CD4-positive, alpha-beta T cell (primary cell): ENCODE measurements at regions of chr15 and their contacts with region 1.

Region 1: GRCh38 chr15:73964736-73965093 is 27.4 kb downstream of the STOML1 start:
- DNase-seq: peak; percentile 76 to 94 (median 86)
- ATAC-seq: peak; percentile 82
- H3K4me3 ChIP-seq: peak overlapping the region; percentile 57
- H3K4me3 Mint-ChIP-seq: peak overlapping the region; percentile 73
- H3K27ac ChIP-seq: no peak overlapping the region
- H3K27ac Mint-ChIP-seq: peak overlapping the region; percentile 73
- H3K4me1 ChIP-seq: peaks cover 33% of the 10 kb centered on the region
- H3K4me1 Mint-ChIP-seq: peaks cover 46% of the 10 kb centered on the region
- H3K27me3 ChIP-seq: no peaks in the 10 kb centered on the region
- H3K27me3 Mint-ChIP-seq: no peaks in the 10 kb centered on the region
- CTCF ChIP-seq: peak; percentile 98

Region 2: DNA sequence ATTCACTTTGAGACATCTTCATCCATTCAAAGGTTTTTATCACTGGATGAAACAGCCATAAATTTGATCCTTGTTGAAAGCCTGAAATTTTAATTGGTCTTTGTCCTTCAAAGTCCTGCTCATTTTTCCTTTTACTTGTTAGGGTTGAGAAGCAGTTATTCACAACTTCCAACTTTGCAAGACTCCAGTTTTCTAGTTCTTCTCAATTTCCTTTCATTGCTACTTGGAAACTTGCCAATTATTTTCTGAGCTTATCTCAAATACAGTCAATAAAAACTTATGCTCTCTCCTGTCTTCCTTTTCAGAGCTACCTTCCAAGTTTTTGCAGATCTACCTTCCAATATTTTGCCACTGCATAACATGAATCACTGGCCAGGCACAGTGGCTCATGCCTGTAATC is 304.3 kb before region 1 on chr15:
- CTCF ChIA-PET with region 1: no interaction called
- POLR2A ChIA-PET with region 1: no interaction called
- intact Hi-C with region 1: no loop called
- DNase-seq: no peak
- ATAC-seq: no peak
- H3K4me3 ChIP-seq: no peak overlapping the region
- H3K4me3 Mint-ChIP-seq: no peak overlapping the region
- H3K27ac ChIP-seq: no peak overlapping the region
- H3K27ac Mint-ChIP-seq: no peak overlapping the region
- H3K4me1 ChIP-seq: no peaks in the 10 kb centered on the region
- H3K4me1 Mint-ChIP-seq: peaks cover 12% of the 10 kb centered on the region
- H3K27me3 ChIP-seq: peaks cover 0 to 11% of the 10 kb centered on the region in 2 experiments
- H3K27me3 Mint-ChIP-seq: peaks cover 46% of the 10 kb centered on the region
- CTCF ChIP-seq: no peak

Region 3: DNA sequence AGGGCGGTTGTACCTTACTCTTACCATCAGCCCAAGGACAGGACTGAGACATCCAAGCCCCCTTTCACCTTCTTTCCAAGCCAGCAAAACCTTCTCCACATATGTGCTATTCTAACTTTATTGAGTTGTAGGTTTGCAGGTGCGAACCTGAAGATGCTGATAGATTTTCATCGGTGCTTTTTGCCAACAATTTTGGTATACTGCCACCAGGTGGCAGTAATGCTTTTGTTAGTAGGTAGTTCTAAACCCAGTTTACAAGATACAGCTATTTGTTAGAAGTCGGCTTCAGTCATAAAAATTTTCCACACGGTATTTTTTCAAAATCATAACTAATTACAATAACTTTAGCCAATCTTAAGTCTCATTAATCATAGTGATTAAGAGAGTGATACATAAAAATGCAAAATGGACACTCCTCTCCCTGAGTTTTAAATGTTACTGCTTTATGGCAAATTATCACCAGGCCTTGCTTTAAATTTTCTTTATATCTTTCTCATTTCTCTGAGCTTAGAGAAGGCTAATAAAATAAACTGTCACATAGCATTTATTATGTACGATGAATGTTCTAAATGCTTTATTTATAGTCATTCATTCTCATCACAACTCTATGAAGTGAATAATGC is 90.7 kb before region 1 on chr15:
- CTCF ChIA-PET with region 1: no interaction called
- POLR2A ChIA-PET with region 1: no interaction called
- intact Hi-C with region 1: loop called in 1 of 2 experiments (anchors 5 kb)
- DNase-seq: peak in 8 of 14 experiments; percentile 4 to 72 (median 26)
- ATAC-seq: no peak
- H3K4me3 ChIP-seq: no peak overlapping the region
- H3K4me3 Mint-ChIP-seq: no peak overlapping the region
- H3K27ac ChIP-seq: no peak overlapping the region
- H3K27ac Mint-ChIP-seq: no peak overlapping the region
- H3K4me1 ChIP-seq: no peaks in the 10 kb centered on the region
- H3K4me1 Mint-ChIP-seq: no peaks in the 10 kb centered on the region
- H3K27me3 ChIP-seq: peaks cover 18 to 24% of the 10 kb centered on the region in 2 experiments
- H3K27me3 Mint-ChIP-seq: peaks cover 49% of the 10 kb centered on the region
- CTCF ChIP-seq: peak; percentile 81

Region 4: GRCh38 chr15:73897441-73898261 is 67.1 kb before region 1 on chr15:
- CTCF ChIA-PET with region 1: interaction called, 3 read pairs
- POLR2A ChIA-PET with region 1: no interaction called
- intact Hi-C with region 1: loop called in 1 of 2 experiments (anchors 1 kb)
- DNase-seq: peak; percentile 16 to 79 (median 35)
- ATAC-seq: peak; percentile 85
- H3K4me3 ChIP-seq: no peak overlapping the region
- H3K4me3 Mint-ChIP-seq: no peak overlapping the region
- H3K27ac ChIP-seq: no peak overlapping the region
- H3K27ac Mint-ChIP-seq: no peak overlapping the region
- H3K4me1 ChIP-seq: peaks cover 5% of the 10 kb centered on the region
- H3K4me1 Mint-ChIP-seq: no peaks in the 10 kb centered on the region
- H3K27me3 ChIP-seq: no peaks in the 10 kb centered on the region
- H3K27me3 Mint-ChIP-seq: peaks cover 4% of the 10 kb centered on the region
- CTCF ChIP-seq: peak; percentile 65

Region 5: DNA sequence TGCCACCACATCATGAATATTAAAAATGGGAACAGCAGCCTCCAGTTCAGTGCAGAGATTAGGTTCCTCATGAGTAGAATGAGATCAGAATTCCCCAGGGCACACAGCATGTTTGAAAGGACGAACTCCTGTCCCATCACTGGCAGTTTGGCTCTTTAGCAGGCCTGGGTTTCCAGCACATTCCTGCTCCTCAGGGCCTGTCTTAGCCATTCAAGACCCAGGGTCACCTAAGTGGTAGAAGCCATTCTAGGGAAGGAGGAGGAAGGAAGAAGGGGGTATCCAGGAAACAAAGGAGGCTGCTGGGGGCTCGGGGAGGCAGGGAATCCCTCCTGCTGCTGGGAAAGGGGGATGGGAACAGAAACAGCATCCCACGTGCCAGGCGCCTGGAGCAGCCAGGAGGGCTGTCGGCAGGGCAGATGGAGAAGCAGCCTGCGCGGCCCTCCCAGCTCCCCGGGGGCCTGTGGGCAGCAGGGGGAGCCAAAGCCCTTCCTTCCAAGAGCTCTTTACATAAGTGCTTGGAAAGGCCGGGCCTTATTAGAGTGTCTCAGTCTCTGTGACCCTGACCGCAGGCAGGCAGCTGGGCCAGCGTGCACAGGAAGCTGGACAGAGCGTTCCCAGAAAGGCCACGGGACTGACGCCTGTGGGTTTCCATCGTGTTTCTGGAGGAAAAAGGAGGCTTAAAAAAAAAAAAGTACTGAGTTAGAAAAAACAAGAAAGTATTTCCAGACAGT is 13.7 kb before region 1 on chr15:
- CTCF ChIA-PET with region 1: interaction called, 46 read pairs
- POLR2A ChIA-PET with region 1: interaction called, 30 read pairs
- intact Hi-C with region 1: loop called (anchors 1 kb)
- DNase-seq: peak; percentile 63 to 85 (median 75)
- ATAC-seq: peak; percentile 97
- H3K4me3 ChIP-seq: no peak overlapping the region
- H3K4me3 Mint-ChIP-seq: no peak overlapping the region
- H3K27ac ChIP-seq: no peak overlapping the region
- H3K27ac Mint-ChIP-seq: peak overlapping the region; percentile 40
- H3K4me1 ChIP-seq: peaks cover 12% of the 10 kb centered on the region
- H3K4me1 Mint-ChIP-seq: peaks cover 9% of the 10 kb centered on the region
- H3K27me3 ChIP-seq: no peaks in the 10 kb centered on the region
- H3K27me3 Mint-ChIP-seq: no peaks in the 10 kb centered on the region
- CTCF ChIP-seq: peak; percentile 86